ENCODE measurements at regions of chr20 and their contacts with region 1.

Region 1: DNA sequence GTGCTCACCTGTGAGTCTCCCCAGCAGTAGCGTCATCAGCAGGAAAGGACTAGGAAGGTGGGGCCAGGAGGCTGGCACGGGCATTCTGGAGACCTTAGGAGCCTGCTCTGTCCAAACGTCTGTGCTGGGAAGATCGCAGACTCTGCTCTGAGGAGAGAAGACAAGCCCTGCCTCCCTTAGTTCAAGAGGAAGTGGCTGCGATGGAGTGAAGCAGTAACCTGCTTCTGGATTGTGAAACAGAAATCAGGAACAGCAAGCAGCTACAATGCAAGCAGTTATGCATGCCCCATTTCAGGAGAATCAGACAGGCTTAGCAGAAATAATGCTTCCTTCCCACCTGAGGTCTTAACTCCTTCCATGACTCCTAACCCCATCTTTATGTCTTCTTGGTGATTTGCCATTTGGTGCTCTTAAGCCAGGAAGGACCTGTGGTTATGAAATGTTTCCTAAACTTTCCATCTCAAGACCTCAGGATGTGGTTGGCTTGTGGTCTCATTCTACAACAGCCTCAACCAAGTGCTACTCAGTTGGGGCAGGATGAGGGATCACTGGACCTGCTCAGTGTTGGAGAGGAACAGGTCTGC is at the start of gene SIRPB1:
- DNase-seq: no peak
- H3K4me3 ChIP-seq: no peak within 1 kb of the TSS
- H3K27ac ChIP-seq: no peak within 1 kb of the TSS
- H3K4me1 ChIP-seq: no peaks in the 10 kb centered on the region
- H3K27me3 ChIP-seq: no peaks in the 10 kb centered on the region
- CTCF ChIP-seq: no peak
- EP300 ChIP-seq: no peak
- POLR2A ChIP-seq: no peak
- total RNA-seq, gene SIRPB1: 0.25 to 9.7 (median 1.9) TPM

Region 2: DNA sequence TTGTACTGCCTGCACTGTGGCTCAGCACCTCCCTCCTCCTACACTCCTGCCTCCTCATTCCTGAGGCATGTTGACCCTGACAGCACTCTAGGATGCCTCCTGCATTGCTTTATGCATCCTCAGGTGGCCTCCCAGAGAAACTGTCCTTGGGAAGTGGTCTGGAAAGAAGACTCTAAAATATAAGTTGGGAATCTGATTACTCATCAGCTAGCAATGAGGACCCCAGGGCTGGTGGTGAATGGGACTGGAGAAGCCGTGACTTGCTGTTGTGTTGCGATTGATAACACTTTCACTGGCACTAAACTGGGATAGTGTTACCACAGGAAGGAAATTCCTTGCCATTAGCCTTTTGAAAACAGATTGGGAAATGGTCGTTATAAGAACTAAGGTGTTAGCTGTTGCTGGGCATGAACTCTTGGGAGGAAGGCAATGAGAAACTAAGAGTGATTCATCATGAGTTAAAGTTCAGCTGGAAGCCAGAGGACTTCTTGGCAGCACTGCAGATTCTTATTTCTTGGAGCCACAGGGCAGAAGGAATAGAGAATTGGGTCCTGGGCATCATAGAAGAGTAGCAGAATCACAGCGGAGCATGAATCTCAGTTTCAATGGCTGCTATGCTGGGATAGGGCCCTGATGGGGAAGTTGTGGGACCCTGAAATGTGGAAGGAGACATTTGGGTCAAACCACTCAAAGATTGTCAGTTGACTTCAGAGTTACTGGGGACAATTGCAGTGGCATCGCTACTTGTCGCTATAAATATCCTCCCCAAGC is 52.4 kb before region 1 on chr20:
- intact Hi-C with region 1: loop called in 1 of 4 experiments (anchors 10 kb)
- DNase-seq: no peak
- H3K4me3 ChIP-seq: no peak overlapping the region
- H3K27ac ChIP-seq: no peak overlapping the region
- H3K4me1 ChIP-seq: no peaks in the 10 kb centered on the region
- H3K27me3 ChIP-seq: no peaks in the 10 kb centered on the region
- CTCF ChIP-seq: no peak
- EP300 ChIP-seq: no peak
- POLR2A ChIP-seq: no peak

Region 3: GRCh38 chr20:2387180-2387577 is 767.2 kb after region 1 on chr20:
- intact Hi-C with region 1: loop called in 1 of 4 experiments (anchors 10 kb)
- DNase-seq: no peak
- H3K4me3 ChIP-seq: no peak overlapping the region
- H3K27ac ChIP-seq: no peak overlapping the region
- H3K4me1 ChIP-seq: no peaks in the 10 kb centered on the region
- H3K27me3 ChIP-seq: no peaks in the 10 kb centered on the region
- CTCF ChIP-seq: no peak
- EP300 ChIP-seq: no peak
- POLR2A ChIP-seq: no peak

Measured in ovary (tissue), 10 donors.